T-cell (primary cell): ENCODE measurements at regions of chr1 and their contacts with region 1.

Region 1: GRCh38 chr1:84506002-84506728 is at the starts of genes GNG5 and SPATA1:
- DNase-seq: peak; percentile 91 to 99 (median 96)
- ATAC-seq: peak; percentile 91 to 94 (median 91)
- H3K4me3 ChIP-seq: peak within 1 kb of the TSS; percentile 81 to 88
- H3K4me3 Mint-ChIP-seq: peak within 1 kb of the TSS; percentile 98 to 100 (median 98)
- H3K27ac ChIP-seq: peak within 1 kb of the TSS; percentile 83
- H3K27ac Mint-ChIP-seq: peak within 1 kb of the TSS; percentile 94 to 97
- H3K4me1 ChIP-seq: peaks cover 9 to 27% of the 10 kb centered on the region in 2 experiments
- H3K4me1 Mint-ChIP-seq: peaks cover 42 to 53% (median 46%) of the 10 kb centered on the region in 3 donors
- H3K27me3 ChIP-seq: no peaks in the 10 kb centered on the region
- H3K27me3 Mint-ChIP-seq: no peaks in the 10 kb centered on the region
- total RNA-seq, gene GNG5: 21.7 to 41.1 (median 34.9) TPM
- total RNA-seq, gene SPATA1: 0.25 to 3.5 (median 2.3) TPM

Region 2: DNA sequence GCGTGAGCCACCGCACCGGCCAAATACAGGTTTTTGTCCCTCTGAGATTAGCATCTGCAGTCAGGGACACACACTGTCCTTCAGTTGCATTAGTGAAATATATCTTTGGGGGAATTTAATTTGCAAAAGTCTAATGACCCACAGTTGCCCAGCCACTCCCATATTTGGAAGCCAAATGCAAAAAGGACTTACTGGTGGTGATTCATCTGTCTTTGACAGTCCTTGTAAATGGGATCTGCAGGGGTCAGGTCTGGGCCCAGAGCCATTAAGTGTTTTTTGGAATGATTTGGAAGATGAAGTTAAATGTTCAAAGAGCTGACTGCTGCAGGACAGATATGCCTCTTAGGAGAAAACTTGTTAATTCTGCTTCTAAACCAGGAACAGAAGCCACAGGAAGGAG is 152.5 kb before region 1 on chr1:
- CTCF ChIA-PET with region 1: no interaction called
- POLR2A ChIA-PET with region 1: no interaction called
- DNase-seq: no peak
- ATAC-seq: no peak
- H3K4me3 ChIP-seq: no peak overlapping the region
- H3K4me3 Mint-ChIP-seq: no peak overlapping the region
- H3K27ac ChIP-seq: no peak overlapping the region
- H3K27ac Mint-ChIP-seq: no peak overlapping the region
- H3K4me1 ChIP-seq: no peaks in the 10 kb centered on the region
- H3K4me1 Mint-ChIP-seq: peaks cover 0 to 7% (median 0%) of the 10 kb centered on the region in 3 donors
- H3K27me3 ChIP-seq: no peaks in the 10 kb centered on the region
- H3K27me3 Mint-ChIP-seq: peaks cover 0 to 7% of the 10 kb centered on the region in 2 donors

Region 3: GRCh38 chr1:84467298-84467697 is 38.9 kb before region 1 on chr1:
- CTCF ChIA-PET with region 1: no interaction called
- POLR2A ChIA-PET with region 1: interaction called in 1 of 2 experiments, 12 read pairs
- DNase-seq: no peak
- ATAC-seq: no peak
- H3K4me3 ChIP-seq: no peak overlapping the region
- H3K4me3 Mint-ChIP-seq: no peak overlapping the region
- H3K27ac ChIP-seq: no peak overlapping the region
- H3K27ac Mint-ChIP-seq: no peak overlapping the region
- H3K4me1 ChIP-seq: no peaks in the 10 kb centered on the region
- H3K4me1 Mint-ChIP-seq: no peaks in the 10 kb centered on the region
- H3K27me3 ChIP-seq: peaks cover 0 to 7% of the 10 kb centered on the region in 2 experiments
- H3K27me3 Mint-ChIP-seq: peaks cover 54 to 56% of the 10 kb centered on the region in 2 donors

Region 4: GRCh38 chr1:84479998-84480397 is 26.2 kb before region 1 on chr1:
- CTCF ChIA-PET with region 1: interaction called, 6 to 7 read pairs
- POLR2A ChIA-PET with region 1: interaction called, 3 to 13 read pairs
- DNase-seq: no peak
- ATAC-seq: no peak
- H3K4me3 ChIP-seq: peak overlapping the region; percentile 74 to 79
- H3K4me3 Mint-ChIP-seq: peak overlapping the region; percentile 95 to 98 (median 96)
- H3K27ac ChIP-seq: peak overlapping the region; percentile 79
- H3K27ac Mint-ChIP-seq: peak overlapping the region; percentile 98 to 99
- H3K4me1 ChIP-seq: peaks cover 16 to 18% of the 10 kb centered on the region in 2 experiments
- H3K4me1 Mint-ChIP-seq: peaks cover 48 to 53% (median 49%) of the 10 kb centered on the region in 3 donors
- H3K27me3 ChIP-seq: peaks cover 0 to 10% of the 10 kb centered on the region in 2 experiments
- H3K27me3 Mint-ChIP-seq: peaks cover 12 to 23% of the 10 kb centered on the region in 2 donors

Region 5: GRCh38 chr1:84573967-84574842 is 68.0 kb after region 1 on chr1 and contains the start of gene CTBS:
- CTCF ChIA-PET with region 1: interaction called in 1 of 2 experiments, 11 read pairs
- POLR2A ChIA-PET with region 1: interaction called in 1 of 2 experiments, 4 read pairs
- DNase-seq: peak; percentile 62 to 92 (median 77)
- ATAC-seq: peak; percentile 91 to 97 (median 96)
- H3K4me3 ChIP-seq: peak within 1 kb of the TSS; percentile 78 to 82
- H3K4me3 Mint-ChIP-seq: peak within 1 kb of the TSS; percentile 94 to 97 (median 97)
- H3K27ac ChIP-seq: peak within 1 kb of the TSS; percentile 94
- H3K27ac Mint-ChIP-seq: peak within 1 kb of the TSS; percentile 98 to 99
- H3K4me1 ChIP-seq: peaks cover 11 to 14% of the 10 kb centered on the region in 2 experiments
- H3K4me1 Mint-ChIP-seq: peaks cover 41 to 52% (median 44%) of the 10 kb centered on the region in 3 donors
- H3K27me3 ChIP-seq: no peaks in the 10 kb centered on the region
- H3K27me3 Mint-ChIP-seq: no peaks in the 10 kb centered on the region
- total RNA-seq, gene CTBS: 14.8 to 20.3 (median 16.4) TPM